Motor neuron (in vitro differentiated cells): ENCODE measurements at regions of chr5 and their contacts with region 1.

Region 1: GRCh38 chr5:157994906-157995519 is 136.1 kb upstream of the CLINT1 start:
- ATAC-seq: peak; percentile 53 to 100 (median 77)
- H3K4me3 ChIP-seq: no peak overlapping the region
- H3K27ac ChIP-seq: no peak overlapping the region
- H3K4me1 ChIP-seq: no peaks in the 10 kb centered on the region

Region 2: GRCh38 chr5:157820593-157821252 is 174.3 kb before region 1 on chr5:
- in situ Hi-C with region 1: loop called in 2 of 9 experiments (anchors 10 to 25 kb)
- ATAC-seq: peak in 1 of 8 experiments; percentile 47
- H3K4me3 ChIP-seq: no peak overlapping the region
- H3K27ac ChIP-seq: no peak overlapping the region
- H3K4me1 ChIP-seq: peaks cover 8 to 20% of the 10 kb centered on the region in 2 donors